ENCODE measurements at regions of chr18 and their contacts with region 1.

Region 1: DNA sequence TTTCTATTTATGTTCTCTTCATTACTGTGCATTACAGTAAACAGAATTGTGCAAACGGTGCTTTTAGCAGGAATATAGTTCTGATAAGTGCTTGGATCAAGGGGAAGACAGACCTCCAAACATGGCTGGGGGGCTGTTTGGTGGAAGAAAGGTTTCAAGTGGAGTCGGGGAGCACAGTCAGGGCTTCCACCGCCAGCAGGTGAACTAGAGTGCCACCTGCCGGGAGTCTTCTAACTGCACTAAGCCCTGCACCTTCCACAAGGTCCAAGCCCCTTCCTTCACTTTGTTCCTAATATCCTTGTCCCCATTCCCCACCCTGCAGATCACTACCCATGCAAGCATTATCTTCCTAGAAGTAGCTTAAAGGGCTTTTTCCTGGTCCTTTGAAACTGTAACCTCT is 11.1 kb downstream of the ONECUT2 start:
- DNase-seq: no peak
- H3K4me3 ChIP-seq: no peak overlapping the region
- H3K27ac ChIP-seq: no peak overlapping the region
- H3K4me1 ChIP-seq: no peaks in the 10 kb centered on the region
- H3K27me3 ChIP-seq: peaks cover 13% of the 10 kb centered on the region
- CTCF ChIP-seq: peak; percentile 35 to 69

Region 2: DNA sequence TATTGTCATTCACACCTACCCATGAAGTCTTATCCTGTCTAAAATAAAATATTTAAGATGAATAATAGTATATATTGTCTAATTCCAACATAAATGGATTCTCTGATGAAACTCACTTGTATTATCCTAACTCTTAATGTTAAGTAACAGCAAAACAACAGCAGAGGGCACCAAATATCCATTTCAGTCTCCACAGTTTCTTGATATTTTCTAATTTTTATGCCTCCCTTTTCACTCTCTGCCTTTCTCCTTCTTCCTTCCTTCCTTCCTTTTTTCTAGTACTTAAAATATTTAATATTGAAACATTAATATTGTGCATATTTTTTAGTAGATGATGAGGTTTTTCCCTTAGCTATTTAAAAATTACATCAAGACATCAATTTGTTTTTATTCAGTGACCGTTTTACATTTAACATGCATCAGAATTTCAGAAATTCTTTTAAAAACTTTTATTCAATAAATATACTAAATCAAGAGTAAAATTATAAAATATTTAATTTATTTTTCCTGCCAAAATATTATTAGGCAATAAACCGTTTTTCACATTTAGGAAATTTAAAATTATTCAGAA is 697.5 kb before region 1 on chr18:
- CTCF ChIA-PET with region 1: no interaction called
- dilution Hi-C with region 1: no loop called
- in situ Hi-C with region 1: no loop called
- intact Hi-C with region 1: loop called (anchors 1 kb)
- DNase-seq: peak; percentile 4
- H3K4me3 ChIP-seq: no peak overlapping the region
- H3K27ac ChIP-seq: no peak overlapping the region
- H3K4me1 ChIP-seq: no peaks in the 10 kb centered on the region
- H3K27me3 ChIP-seq: no peaks in the 10 kb centered on the region
- CTCF ChIP-seq: peak; percentile 45 to 57

Region 3: GRCh38 chr18:56789004-56789888 is 657.1 kb before region 1 on chr18:
- CTCF ChIA-PET with region 1: no interaction called
- dilution Hi-C with region 1: no loop called
- in situ Hi-C with region 1: no loop called
- intact Hi-C with region 1: loop called (anchors 1 kb)
- DNase-seq: peak; percentile 14
- H3K4me3 ChIP-seq: no peak overlapping the region
- H3K27ac ChIP-seq: no peak overlapping the region
- H3K4me1 ChIP-seq: no peaks in the 10 kb centered on the region
- H3K27me3 ChIP-seq: no peaks in the 10 kb centered on the region
- CTCF ChIP-seq: peak; percentile 65 to 72

Region 4: GRCh38 chr18:56869189-56869777 is 577.0 kb before region 1 on chr18:
- CTCF ChIA-PET with region 1: no interaction called
- dilution Hi-C with region 1: no loop called
- in situ Hi-C with region 1: no loop called
- intact Hi-C with region 1: loop called (anchors 1 kb)
- DNase-seq: peak; percentile 25
- H3K4me3 ChIP-seq: no peak overlapping the region
- H3K27ac ChIP-seq: no peak overlapping the region
- H3K4me1 ChIP-seq: no peaks in the 10 kb centered on the region
- H3K27me3 ChIP-seq: no peaks in the 10 kb centered on the region
- CTCF ChIP-seq: peak; percentile 79 to 80

Region 5: GRCh38 chr18:57051657-57052044 is 394.7 kb before region 1 on chr18:
- CTCF ChIA-PET with region 1: no interaction called
- dilution Hi-C with region 1: no loop called
- in situ Hi-C with region 1: no loop called
- intact Hi-C with region 1: loop called (anchors 5 kb)
- DNase-seq: no peak
- H3K4me3 ChIP-seq: no peak overlapping the region
- H3K27ac ChIP-seq: no peak overlapping the region
- H3K4me1 ChIP-seq: no peaks in the 10 kb centered on the region
- H3K27me3 ChIP-seq: no peaks in the 10 kb centered on the region
- CTCF ChIP-seq: no peak

Region 6: DNA sequence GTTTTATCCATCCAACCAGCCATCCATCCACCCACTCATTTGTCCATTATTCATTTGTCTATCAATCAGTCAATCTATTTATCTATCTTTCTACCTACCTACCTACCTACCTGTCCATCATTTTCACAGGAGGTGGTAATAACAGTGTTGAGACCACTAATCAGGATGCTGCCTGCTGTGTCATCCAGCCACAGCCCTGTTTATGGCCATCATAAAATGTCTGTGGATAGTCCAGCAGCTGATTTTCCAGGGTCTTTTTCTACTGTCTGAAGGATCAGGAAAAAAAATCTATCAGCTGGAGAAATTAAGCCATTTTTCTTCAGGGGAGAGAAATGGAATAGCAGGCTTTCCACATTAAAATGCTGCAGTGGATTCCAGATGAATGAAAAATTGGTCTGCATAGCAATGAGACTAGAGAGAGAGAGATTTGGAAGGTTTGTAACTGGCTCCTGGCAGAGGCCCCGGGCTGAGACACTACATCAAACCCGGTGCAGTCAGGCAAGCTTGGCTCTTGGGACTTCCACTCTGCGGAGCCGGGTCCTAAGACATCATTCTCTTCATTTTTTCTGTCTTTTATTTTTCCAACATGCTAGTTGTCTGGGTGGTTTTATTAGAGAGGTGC is 332.4 kb before region 1 on chr18:
- CTCF ChIA-PET with region 1: no interaction called
- dilution Hi-C with region 1: no loop called
- in situ Hi-C with region 1: no loop called
- intact Hi-C with region 1: loop called (anchors 5 kb)
- DNase-seq: no peak
- H3K4me3 ChIP-seq: no peak overlapping the region
- H3K27ac ChIP-seq: no peak overlapping the region
- H3K4me1 ChIP-seq: no peaks in the 10 kb centered on the region
- H3K27me3 ChIP-seq: no peaks in the 10 kb centered on the region
- CTCF ChIP-seq: no peak

Region 7: DNA sequence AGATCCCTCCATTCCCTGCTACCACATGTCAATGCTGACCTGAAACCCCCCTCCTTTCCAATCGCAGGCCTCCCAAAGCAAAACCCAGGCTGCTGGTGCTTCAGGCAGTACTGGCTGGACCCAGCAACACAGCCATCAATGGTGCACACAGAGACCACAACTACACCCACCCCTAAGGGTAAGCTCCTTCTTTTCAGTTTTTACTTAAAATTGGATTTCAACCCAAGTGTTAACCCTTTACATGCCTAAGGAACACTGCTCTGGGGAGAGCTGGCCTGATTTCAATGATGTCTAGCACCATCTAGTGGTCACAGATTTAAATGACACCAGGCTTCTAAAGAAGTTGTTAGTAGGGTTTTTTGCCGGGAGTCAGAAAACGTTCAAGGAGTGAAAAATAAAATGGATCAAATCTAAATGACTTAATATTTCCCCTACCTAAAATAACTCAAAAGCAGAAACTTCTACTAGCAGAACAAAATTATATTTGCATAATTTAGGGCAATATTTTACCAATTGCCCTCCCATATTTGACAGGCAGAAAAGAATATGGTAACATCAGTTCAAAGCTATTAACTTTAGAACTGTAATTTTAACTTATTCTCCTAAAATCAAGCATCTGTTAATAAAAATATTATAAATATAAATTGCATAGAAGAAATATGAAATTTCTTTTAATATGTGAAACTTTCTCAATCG is 115.6 kb after region 1 on chr18:
- CTCF ChIA-PET with region 1: no interaction called
- dilution Hi-C with region 1: no loop called
- in situ Hi-C with region 1: no loop called
- intact Hi-C with region 1: loop called (anchors 5 kb)
- DNase-seq: peak; percentile 19
- H3K4me3 ChIP-seq: no peak overlapping the region
- H3K27ac ChIP-seq: no peak overlapping the region
- H3K4me1 ChIP-seq: no peaks in the 10 kb centered on the region
- H3K27me3 ChIP-seq: no peaks in the 10 kb centered on the region
- CTCF ChIP-seq: peak; percentile 66 to 71

Region 8: DNA sequence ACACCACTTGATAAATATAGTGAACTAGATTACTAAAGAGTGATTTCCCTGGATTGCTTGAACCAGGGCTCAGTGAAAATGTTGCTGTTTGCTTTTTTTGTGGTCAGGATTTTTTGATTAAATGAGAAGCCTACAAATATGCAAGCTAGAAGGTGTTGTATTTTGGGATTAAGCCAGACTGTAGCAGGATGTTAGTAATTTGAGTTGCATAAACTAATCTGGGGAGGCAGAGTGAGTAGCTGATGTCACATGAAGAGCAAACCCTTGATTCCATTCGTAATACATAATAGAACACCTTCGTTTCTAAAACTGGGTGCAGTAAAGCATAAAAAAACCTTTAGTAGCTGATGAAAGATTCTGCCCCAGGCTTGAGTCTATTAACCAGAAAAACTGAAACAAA is 629.7 kb after region 1 on chr18:
- CTCF ChIA-PET with region 1: no interaction called
- dilution Hi-C with region 1: no loop called
- in situ Hi-C with region 1: no loop called
- intact Hi-C with region 1: no loop called
- DNase-seq: peak; percentile 44
- H3K4me3 ChIP-seq: no peak overlapping the region
- H3K27ac ChIP-seq: no peak overlapping the region
- H3K4me1 ChIP-seq: peaks cover 16% of the 10 kb centered on the region
- H3K27me3 ChIP-seq: no peaks in the 10 kb centered on the region
- CTCF ChIP-seq: no peak

Measured in mammary epithelial cell (primary cell).